IMR-90 (cell line): ENCODE measurements at regions of chr6 and their contacts with region 1.

Region 1: GRCh38 chr6:163956571-163957407 is 542.3 kb downstream of the QKI start:
- DNase-seq: peak; percentile 78
- ATAC-seq: peak; percentile 73
- H3K4me3 ChIP-seq: no peak overlapping the region
- H3K27ac ChIP-seq: no peak overlapping the region
- H3K4me1 ChIP-seq: peaks cover 5% of the 10 kb centered on the region; the same call in 1 of the 2 replicates
- H3K27me3 ChIP-seq: no peaks in the 10 kb centered on the region
- CTCF ChIP-seq: peak; percentile 90
- POLR2A ChIP-seq: no peak
- RAD21 ChIP-seq: peak; percentile 94

Region 2: GRCh38 chr6:162856885-162857284 is 1099.9 kb before region 1 on chr6:
- CTCF ChIA-PET with region 1: no interaction called
- POLR2A ChIA-PET with region 1: no interaction called
- dilution Hi-C with region 1: no loop called
- in situ Hi-C with region 1: no loop called
- intact Hi-C with region 1: loop called (anchors 10 kb)
- DNase-seq: peak; percentile 60
- ATAC-seq: peak; percentile 89
- H3K4me3 ChIP-seq: peak overlapping the region; percentile 22; the same call in 1 of the 2 replicates
- H3K27ac ChIP-seq: no peak overlapping the region
- H3K4me1 ChIP-seq: no peaks in the 10 kb centered on the region
- H3K27me3 ChIP-seq: no peaks in the 10 kb centered on the region
- CTCF ChIP-seq: peak; percentile 46
- POLR2A ChIP-seq: no peak
- RAD21 ChIP-seq: peak; percentile 63

Region 3: DNA sequence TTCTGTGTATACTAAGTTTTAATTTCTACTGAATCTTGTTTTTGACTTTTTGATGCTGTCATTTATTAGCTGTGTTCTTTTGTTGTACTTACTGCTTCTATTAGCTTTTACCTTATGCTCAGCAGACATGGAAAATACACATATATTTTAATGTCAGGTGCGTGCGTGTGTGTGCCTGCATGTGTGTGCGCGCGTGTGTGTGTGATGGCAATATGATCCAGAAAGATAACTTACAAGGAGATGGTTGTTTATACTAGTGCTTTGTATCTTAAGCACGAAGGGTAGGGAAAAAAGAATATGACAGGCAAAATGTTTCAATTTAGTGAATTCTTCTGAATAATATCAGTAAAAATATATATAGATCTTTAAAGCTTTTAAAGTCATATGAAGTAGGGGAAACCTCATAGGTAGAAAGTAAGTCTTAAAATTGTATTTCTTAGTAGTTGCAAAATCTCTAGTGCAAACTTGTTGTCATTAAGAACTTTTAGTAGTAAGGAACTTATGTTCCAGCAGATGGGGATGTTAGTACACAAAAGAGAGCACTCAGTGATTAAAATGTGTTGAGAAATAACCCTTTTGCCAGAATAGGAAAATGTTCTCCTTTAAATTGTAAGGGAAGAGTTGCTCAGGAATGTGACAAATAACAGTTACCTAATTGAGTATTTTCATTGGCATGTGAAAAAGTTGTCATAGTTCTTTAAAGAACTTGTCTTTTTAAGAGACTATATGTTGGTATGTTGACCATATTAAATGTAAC is 529.1 kb before region 1 on chr6:
- CTCF ChIA-PET with region 1: no interaction called
- POLR2A ChIA-PET with region 1: no interaction called
- dilution Hi-C with region 1: no loop called
- in situ Hi-C with region 1: loop called (anchors 10 kb)
- intact Hi-C with region 1: loop called (anchors 2 kb)
- DNase-seq: peak; percentile 82
- ATAC-seq: peak; percentile 56
- H3K4me3 ChIP-seq: no peak overlapping the region
- H3K27ac ChIP-seq: no peak overlapping the region
- H3K4me1 ChIP-seq: peaks cover 18% of the 10 kb centered on the region
- H3K27me3 ChIP-seq: no peaks in the 10 kb centered on the region
- CTCF ChIP-seq: peak; percentile 63
- POLR2A ChIP-seq: no peak
- RAD21 ChIP-seq: peak; percentile 77

Region 4: GRCh38 chr6:163533443-163533842 is 423.3 kb before region 1 on chr6:
- CTCF ChIA-PET with region 1: no interaction called
- POLR2A ChIA-PET with region 1: no interaction called
- dilution Hi-C with region 1: no loop called
- in situ Hi-C with region 1: no loop called
- intact Hi-C with region 1: loop called (anchors 2 kb)
- DNase-seq: peak; percentile 97
- ATAC-seq: peak; percentile 75
- H3K4me3 ChIP-seq: no peak overlapping the region
- H3K27ac ChIP-seq: no peak overlapping the region
- H3K4me1 ChIP-seq: peaks cover 17% of the 10 kb centered on the region
- H3K27me3 ChIP-seq: no peaks in the 10 kb centered on the region
- CTCF ChIP-seq: no peak
- POLR2A ChIP-seq: no peak
- RAD21 ChIP-seq: no peak

Region 5: DNA sequence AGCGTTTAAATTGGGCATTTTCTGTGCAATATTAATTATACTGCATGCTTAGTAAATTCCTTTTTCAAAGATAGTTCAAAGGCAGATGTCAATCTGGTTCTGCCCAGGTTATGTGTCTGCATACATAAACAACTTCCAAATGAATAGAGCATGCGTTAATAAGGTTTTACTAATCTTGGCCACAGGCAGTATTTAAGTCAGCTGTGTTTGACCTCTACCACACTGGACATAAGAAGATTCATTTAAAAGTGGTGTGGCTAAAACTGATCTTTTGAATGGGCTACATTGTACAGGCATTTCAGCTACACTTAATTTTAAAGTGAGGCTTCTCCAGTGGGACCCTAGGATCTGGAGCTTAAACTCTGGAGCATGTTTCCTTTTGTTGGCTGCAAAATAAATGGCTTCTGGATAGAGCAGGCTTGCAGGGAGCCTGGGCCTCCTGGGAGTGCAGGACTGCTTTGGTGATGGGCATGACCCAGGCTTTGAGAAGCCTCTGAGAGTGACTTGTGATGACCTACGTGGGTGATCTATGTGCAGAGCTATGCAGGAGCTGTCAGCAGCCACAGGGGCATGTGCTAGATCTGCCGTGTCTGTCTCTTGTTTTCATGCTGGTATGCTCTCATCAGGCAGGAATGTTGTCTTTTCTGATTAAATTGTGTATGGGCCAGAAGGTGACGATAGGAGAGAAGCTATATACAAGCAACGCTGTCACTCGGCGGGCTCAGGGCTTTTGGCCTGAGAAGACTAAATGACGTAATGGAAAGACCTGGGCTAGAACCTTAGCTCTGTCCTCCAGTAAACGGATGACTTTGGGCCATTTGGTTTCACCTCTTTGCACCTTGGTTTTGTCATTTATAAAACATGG is 211.0 kb before region 1 on chr6:
- CTCF ChIA-PET with region 1: no interaction called
- POLR2A ChIA-PET with region 1: no interaction called
- dilution Hi-C with region 1: no loop called
- in situ Hi-C with region 1: no loop called
- intact Hi-C with region 1: loop called (anchors 5 kb)
- DNase-seq: peak; percentile 92
- ATAC-seq: peak; percentile 98
- H3K4me3 ChIP-seq: no peak overlapping the region
- H3K27ac ChIP-seq: no peak overlapping the region
- H3K4me1 ChIP-seq: peaks cover 4% of the 10 kb centered on the region
- H3K27me3 ChIP-seq: no peaks in the 10 kb centered on the region
- CTCF ChIP-seq: no peak
- POLR2A ChIP-seq: no peak
- RAD21 ChIP-seq: 0 out of 2 replicates have a peak, but pooled peaks have one; percentile 2

Region 6: DNA sequence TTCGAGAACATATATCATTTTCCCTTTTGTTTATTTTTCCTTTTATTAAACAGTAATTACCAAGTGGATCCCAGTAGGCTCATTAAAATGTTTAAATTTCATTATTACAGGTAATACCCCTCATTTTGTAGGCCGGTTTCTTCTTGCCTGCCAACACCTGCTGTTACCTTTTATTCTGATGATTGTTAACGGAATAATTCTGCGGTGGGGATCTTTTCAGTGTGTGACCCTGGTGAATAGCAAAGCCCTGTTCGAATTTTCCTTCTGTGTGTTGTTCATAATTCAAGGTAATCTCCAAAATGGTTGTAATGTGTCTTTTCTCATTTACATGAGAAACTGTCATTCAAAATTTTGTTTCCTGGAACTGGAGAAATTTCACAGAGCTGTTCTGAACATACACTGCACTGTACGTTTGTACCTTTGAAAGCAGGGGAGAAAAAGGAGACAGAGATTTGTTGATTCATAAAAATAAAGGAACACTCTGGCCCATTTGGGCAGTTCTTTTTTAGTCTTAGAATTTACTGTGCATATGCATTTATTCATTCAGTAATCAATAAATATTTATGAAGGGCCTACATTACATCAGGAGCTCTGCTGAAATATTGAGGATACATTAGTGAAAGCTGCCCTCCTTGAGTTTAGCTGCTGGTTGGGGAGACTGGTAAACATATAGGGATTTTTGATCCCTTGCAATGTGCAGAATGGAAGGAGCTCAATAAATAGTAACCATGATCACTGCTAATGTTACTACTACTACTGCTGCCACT is 40.3 kb before region 1 on chr6:
- CTCF ChIA-PET with region 1: no interaction called
- POLR2A ChIA-PET with region 1: no interaction called
- dilution Hi-C with region 1: no loop called
- in situ Hi-C with region 1: no loop called
- intact Hi-C with region 1: no loop called
- DNase-seq: no peak
- ATAC-seq: no peak
- H3K4me3 ChIP-seq: no peak overlapping the region
- H3K27ac ChIP-seq: no peak overlapping the region
- H3K4me1 ChIP-seq: no peaks in the 10 kb centered on the region
- H3K27me3 ChIP-seq: no peaks in the 10 kb centered on the region; the same call in 1 of the 2 replicates
- CTCF ChIP-seq: no peak
- POLR2A ChIP-seq: no peak
- RAD21 ChIP-seq: no peak

Region 7: DNA sequence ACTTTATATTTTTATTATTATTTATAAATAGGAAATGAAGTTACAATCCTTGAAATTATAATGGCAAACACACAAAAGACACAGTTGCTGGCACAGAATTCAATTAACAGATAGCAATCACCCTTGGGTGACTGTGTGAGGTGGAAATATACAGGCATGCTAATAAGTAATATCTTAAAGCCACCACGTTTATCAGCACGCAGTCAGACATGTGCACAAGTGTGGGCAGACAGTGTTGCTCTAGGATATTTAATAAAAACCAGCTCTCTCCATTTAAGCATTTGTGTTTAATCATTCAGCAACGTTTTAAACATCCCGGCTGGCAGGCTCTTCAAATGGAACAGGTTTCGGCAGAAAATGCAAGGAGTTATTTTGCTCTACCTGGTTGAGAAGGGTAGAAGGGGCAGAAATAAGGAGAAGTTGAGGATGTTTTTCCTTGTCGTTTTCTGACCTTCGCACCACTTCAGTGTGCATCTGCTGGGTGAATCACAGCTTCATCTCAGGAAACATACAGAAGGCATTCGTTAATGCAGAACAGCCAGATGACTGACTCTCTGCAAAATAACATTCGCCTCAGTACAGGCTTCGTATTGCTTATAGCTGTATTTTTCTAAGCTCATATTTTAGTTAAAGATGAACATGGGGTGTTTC is 42.8 kb after region 1 on chr6:
- CTCF ChIA-PET with region 1: no interaction called
- POLR2A ChIA-PET with region 1: no interaction called
- dilution Hi-C with region 1: no loop called
- in situ Hi-C with region 1: no loop called
- intact Hi-C with region 1: no loop called
- DNase-seq: no peak
- ATAC-seq: no peak
- H3K4me3 ChIP-seq: no peak overlapping the region
- H3K27ac ChIP-seq: no peak overlapping the region
- H3K4me1 ChIP-seq: no peaks in the 10 kb centered on the region
- H3K27me3 ChIP-seq: no peaks in the 10 kb centered on the region
- CTCF ChIP-seq: no peak
- POLR2A ChIP-seq: no peak
- RAD21 ChIP-seq: no peak

Region 8: GRCh38 chr6:164109770-164110140 is 153.0 kb after region 1 on chr6:
- CTCF ChIA-PET with region 1: no interaction called
- POLR2A ChIA-PET with region 1: no interaction called
- dilution Hi-C with region 1: no loop called
- in situ Hi-C with region 1: no loop called
- intact Hi-C with region 1: no loop called
- DNase-seq: no peak
- ATAC-seq: no peak
- H3K4me3 ChIP-seq: no peak overlapping the region
- H3K27ac ChIP-seq: no peak overlapping the region
- H3K4me1 ChIP-seq: no peaks in the 10 kb centered on the region
- H3K27me3 ChIP-seq: no peaks in the 10 kb centered on the region
- CTCF ChIP-seq: no peak
- POLR2A ChIP-seq: no peak
- RAD21 ChIP-seq: no peak

Region 9: DNA sequence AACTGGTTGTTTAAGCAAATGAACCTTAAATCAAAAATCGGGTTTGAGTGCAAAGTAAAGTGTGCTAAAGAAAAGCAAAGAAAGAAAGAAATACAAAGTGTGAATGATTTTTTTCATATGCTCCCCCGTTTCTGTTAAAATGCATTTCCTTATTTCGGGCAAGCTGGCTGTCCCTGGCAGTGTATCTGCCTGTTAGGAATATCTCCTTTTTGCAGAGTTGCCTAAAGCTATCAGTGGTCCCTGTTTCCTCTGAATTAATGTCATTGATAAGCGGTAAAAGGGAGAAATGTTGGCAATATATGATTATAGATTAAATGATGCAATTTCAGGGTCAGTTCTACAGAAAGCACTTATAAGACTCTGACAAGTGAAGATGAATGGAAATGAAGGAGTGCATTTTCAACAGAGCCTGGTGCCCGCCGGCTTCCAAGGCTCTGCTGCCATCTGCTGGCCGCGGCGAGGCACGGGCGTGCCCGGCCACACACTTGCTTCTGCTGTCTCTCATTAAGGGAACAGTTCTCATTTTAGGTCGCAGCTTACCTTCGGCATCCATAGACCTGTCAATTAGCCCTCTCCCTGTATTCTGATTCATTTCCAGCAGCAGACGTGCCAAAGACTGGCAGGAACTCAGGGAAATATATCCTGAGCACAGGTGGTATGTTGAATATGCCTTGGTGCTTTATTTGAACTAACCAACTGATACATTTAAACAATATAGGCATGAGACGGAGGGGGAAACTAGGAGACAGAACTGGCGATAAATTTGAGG is 970.7 kb after region 1 on chr6:
- CTCF ChIA-PET with region 1: no interaction called
- POLR2A ChIA-PET with region 1: no interaction called
- dilution Hi-C with region 1: no loop called
- in situ Hi-C with region 1: no loop called
- intact Hi-C with region 1: loop called (anchors 1 kb)
- DNase-seq: peak; percentile 27
- ATAC-seq: peak; percentile 96
- H3K4me3 ChIP-seq: no peak overlapping the region
- H3K27ac ChIP-seq: no peak overlapping the region
- H3K4me1 ChIP-seq: no peaks in the 10 kb centered on the region
- H3K27me3 ChIP-seq: no peaks in the 10 kb centered on the region
- CTCF ChIP-seq: peak; percentile 81
- POLR2A ChIP-seq: no peak
- RAD21 ChIP-seq: peak; percentile 85